HepG2 (cell line): ENCODE measurements at regions of chr12 and their contacts with region 1.

Region 1: GRCh38 chr12:3097186-3097804 is 20.1 kb downstream of the TSPAN9 start:
- DNase-seq: peak; percentile 69
- ATAC-seq: peak; percentile 81
- H3K4me3 ChIP-seq: peak overlapping the region; percentile 9 to 51 (median 34); a peak in 4 of 6 replicates
- H3K27ac ChIP-seq: peak overlapping the region; percentile 83
- H3K4me1 ChIP-seq: peaks cover 71% of the 10 kb centered on the region
- H3K27me3 ChIP-seq: no peaks in the 10 kb centered on the region
- CTCF ChIP-seq: no peak
- EP300 ChIP-seq: no peak
- POLR2A ChIP-seq: no peak
- RAD21 ChIP-seq: no peak

Region 2: DNA sequence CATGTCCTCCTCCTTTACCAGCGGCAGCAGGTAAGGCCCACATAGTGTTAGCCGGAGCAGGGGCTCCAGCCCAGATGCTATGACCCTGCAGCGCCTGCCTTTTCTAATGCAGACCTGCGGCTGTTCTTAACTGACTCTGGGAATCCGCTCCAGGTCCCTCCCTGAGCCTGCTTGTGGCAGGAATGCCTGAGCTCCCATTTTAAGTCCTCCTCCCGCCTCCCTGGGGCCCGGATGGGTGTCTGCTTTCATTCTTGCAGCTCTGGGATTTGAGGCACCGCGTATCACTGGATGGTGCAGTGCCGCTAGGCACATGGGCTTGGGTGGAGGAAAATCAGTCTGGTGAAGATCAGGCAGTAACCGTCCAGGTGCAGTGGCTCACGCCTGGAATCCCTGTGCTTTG is 12.6 kb before region 1 on chr12:
- CTCF ChIA-PET with region 1: no interaction called
- POLR2A ChIA-PET with region 1: interaction called, 16 read pairs
- in situ Hi-C with region 1: no loop called
- intact Hi-C with region 1: no loop called
- DNase-seq: no peak
- ATAC-seq: no peak
- H3K4me3 ChIP-seq: no peak overlapping the region
- H3K27ac ChIP-seq: peak overlapping the region; percentile 75
- H3K4me1 ChIP-seq: peaks cover 91% of the 10 kb centered on the region
- H3K27me3 ChIP-seq: no peaks in the 10 kb centered on the region
- CTCF ChIP-seq: no peak
- EP300 ChIP-seq: no peak
- POLR2A ChIP-seq: no peak
- RAD21 ChIP-seq: no peak

Region 3: DNA sequence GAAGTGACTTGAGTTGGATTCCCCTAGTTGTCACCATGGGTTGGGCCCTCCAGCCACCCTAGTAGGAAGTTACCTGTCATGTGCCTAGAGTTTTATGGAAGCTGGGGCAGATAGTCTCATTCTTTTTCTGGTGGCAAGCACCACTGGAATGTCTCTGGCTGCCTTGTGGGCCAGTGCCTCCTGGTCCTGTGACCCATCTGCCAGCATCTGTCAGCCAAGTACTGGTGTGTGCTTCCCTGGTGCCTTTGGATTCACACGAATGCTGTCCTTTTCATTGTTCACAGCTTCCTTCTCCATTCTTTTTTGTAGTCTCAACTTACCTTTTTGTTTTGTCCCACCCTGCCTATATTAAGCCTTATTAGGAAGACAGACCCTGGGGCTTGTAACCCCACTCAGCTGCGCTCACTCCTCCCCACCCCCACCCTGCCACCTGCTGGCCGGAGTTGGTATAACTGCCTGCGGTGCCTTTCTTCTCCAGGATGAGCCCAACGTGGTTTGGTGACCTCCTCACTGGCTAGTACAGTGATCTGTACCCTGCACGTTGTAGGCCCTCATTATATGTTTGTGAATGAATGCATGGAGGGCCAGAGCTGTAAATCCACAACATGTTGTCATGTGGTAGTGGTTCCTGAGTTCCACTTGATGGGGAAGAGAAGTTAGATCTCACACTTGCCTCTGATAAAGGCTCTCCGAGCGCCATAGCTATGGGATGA is 105.6 kb after region 1 on chr12:
- CTCF ChIA-PET with region 1: no interaction called
- POLR2A ChIA-PET with region 1: no interaction called
- in situ Hi-C with region 1: no loop called
- intact Hi-C with region 1: no loop called
- DNase-seq: peak; percentile 28
- ATAC-seq: peak; percentile 63
- H3K4me3 ChIP-seq: no peak overlapping the region
- H3K27ac ChIP-seq: no peak overlapping the region
- H3K4me1 ChIP-seq: 0 out of 2 replicates have a peak, but pooled peaks cover 8% of the 10 kb centered on the region
- H3K27me3 ChIP-seq: no peaks in the 10 kb centered on the region
- CTCF ChIP-seq: peak; percentile 92
- EP300 ChIP-seq: no peak
- POLR2A ChIP-seq: no peak
- RAD21 ChIP-seq: peak; percentile 53; the same call in 1 of the 2 replicates

Region 4: DNA sequence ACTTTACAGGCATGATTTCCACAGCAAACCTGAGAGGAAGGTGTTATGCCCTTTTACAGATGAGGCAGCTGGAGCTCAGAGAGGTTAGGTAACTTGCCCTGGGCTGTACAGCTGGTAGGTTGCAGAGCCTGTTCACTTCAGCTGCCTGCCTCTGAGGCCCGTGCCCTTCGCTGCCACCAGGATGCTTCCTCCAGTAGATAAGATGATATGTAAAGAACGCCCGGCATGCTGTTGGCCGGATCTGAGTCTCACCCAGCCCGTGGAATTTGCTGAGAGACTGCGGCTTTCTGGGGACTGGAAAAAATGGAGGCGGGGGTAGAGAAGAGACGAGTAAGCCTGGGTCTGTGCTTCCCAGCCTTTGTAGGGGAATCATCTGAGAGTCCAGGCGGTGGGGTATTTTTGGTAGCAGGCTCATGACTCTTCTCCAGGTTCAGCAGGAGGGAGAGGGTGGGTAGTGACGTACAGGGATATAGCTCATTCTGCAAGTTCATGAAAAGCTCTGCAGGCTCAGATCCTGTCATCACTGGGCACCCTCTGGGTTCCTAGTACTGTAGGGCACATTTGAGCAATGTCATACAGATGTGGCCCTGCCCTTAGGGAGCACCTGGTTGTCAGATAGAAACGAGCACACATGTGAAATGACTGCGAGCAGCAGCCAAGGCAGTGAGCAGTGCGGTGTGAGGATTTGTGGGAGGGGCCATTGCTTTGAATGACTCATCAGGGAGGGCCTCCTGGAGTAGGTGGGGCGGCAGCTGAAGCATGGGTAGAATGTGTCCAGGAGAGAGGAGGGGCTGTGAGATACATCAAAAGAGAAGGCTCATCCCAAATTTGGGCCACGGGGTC is 139.3 kb after region 1 on chr12:
- CTCF ChIA-PET with region 1: no interaction called
- POLR2A ChIA-PET with region 1: no interaction called
- in situ Hi-C with region 1: no loop called
- intact Hi-C with region 1: no loop called
- DNase-seq: peak; percentile 29
- ATAC-seq: peak; percentile 31; the same call in 2 of the 3 replicates
- H3K4me3 ChIP-seq: no peak overlapping the region
- H3K27ac ChIP-seq: no peak overlapping the region
- H3K4me1 ChIP-seq: peaks cover 18% of the 10 kb centered on the region
- H3K27me3 ChIP-seq: no peaks in the 10 kb centered on the region
- CTCF ChIP-seq: no peak
- EP300 ChIP-seq: no peak
- POLR2A ChIP-seq: no peak
- RAD21 ChIP-seq: no peak

Region 5: GRCh38 chr12:3692616-3693365 is 595.5 kb after region 1 on chr12:
- CTCF ChIA-PET with region 1: no interaction called
- POLR2A ChIA-PET with region 1: no interaction called
- in situ Hi-C with region 1: no loop called
- intact Hi-C with region 1: loop called (anchors 5 kb)
- DNase-seq: no peak
- ATAC-seq: no peak
- H3K4me3 ChIP-seq: no peak overlapping the region
- H3K27ac ChIP-seq: no peak overlapping the region
- H3K4me1 ChIP-seq: no peaks in the 10 kb centered on the region
- H3K27me3 ChIP-seq: no peaks in the 10 kb centered on the region; a peak in 1 of 5 replicates
- CTCF ChIP-seq: no peak
- EP300 ChIP-seq: no peak
- POLR2A ChIP-seq: no peak
- RAD21 ChIP-seq: no peak